ENCODE measurements at regions of chr12 and their contacts with region 1.

Region 1: GRCh38 chr12:817941-818600 is 65.7 kb downstream of the WNK1 start:
- DNase-seq: no peak
- H3K4me3 ChIP-seq: no peak overlapping the region
- H3K27ac ChIP-seq: no peak overlapping the region
- H3K27me3 ChIP-seq: no peaks in the 10 kb centered on the region
- CTCF ChIP-seq: no peak

Region 2: DNA sequence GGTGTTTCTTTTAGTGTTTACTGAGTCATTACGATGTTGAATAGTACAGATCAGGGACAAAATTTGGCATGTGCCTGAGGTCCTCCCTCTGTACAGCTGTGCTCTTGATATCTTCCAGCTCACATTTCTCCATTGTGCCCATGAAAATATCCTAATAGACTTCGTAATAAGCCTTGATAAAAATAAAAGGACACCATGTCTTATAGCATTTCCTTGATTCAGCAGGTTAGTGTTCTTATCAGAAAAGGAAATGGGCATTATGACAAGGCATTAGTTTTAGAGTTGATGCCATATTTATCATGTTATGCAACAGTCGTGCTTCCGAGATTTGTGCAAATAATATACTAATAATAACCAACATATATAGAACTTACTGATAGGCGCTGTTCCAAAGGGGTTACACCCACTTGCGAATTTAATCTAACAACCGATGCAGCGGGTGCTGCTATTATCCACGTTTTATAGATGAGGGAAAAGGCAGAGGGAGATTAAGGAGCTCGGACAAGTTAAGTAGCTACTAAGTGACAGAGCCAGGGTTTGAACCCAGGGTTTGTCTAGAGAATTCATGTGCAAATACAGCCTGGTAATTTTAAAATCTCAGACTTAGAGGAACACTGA is 80.8 kb before region 1 on chr12:
- CTCF ChIA-PET with region 1: no interaction called
- POLR2A ChIA-PET with region 1: no interaction called
- DNase-seq: no peak
- H3K4me3 ChIP-seq: no peak overlapping the region
- H3K27ac ChIP-seq: no peak overlapping the region
- H3K27me3 ChIP-seq: peaks cover 2% of the 10 kb centered on the region
- CTCF ChIP-seq: no peak

Region 3: GRCh38 chr12:835754-836518 is 17.9 kb after region 1 on chr12:
- CTCF ChIA-PET with region 1: interaction called, 18 read pairs
- POLR2A ChIA-PET with region 1: no interaction called
- DNase-seq: no peak
- H3K4me3 ChIP-seq: no peak overlapping the region
- H3K27ac ChIP-seq: no peak overlapping the region
- H3K27me3 ChIP-seq: no peaks in the 10 kb centered on the region
- CTCF ChIP-seq: no peak

Region 4: GRCh38 chr12:1328391-1328790 is 510.3 kb after region 1 on chr12:
- CTCF ChIA-PET with region 1: no interaction called
- POLR2A ChIA-PET with region 1: no interaction called
- DNase-seq: no peak
- H3K4me3 ChIP-seq: no peak overlapping the region
- H3K27ac ChIP-seq: no peak overlapping the region
- H3K27me3 ChIP-seq: no peaks in the 10 kb centered on the region
- CTCF ChIP-seq: no peak

Measured in AG04450 (cell line).